WTC11 (cell line): ENCODE measurements at regions of chr1 and their contacts with region 1.

Region 1: DNA sequence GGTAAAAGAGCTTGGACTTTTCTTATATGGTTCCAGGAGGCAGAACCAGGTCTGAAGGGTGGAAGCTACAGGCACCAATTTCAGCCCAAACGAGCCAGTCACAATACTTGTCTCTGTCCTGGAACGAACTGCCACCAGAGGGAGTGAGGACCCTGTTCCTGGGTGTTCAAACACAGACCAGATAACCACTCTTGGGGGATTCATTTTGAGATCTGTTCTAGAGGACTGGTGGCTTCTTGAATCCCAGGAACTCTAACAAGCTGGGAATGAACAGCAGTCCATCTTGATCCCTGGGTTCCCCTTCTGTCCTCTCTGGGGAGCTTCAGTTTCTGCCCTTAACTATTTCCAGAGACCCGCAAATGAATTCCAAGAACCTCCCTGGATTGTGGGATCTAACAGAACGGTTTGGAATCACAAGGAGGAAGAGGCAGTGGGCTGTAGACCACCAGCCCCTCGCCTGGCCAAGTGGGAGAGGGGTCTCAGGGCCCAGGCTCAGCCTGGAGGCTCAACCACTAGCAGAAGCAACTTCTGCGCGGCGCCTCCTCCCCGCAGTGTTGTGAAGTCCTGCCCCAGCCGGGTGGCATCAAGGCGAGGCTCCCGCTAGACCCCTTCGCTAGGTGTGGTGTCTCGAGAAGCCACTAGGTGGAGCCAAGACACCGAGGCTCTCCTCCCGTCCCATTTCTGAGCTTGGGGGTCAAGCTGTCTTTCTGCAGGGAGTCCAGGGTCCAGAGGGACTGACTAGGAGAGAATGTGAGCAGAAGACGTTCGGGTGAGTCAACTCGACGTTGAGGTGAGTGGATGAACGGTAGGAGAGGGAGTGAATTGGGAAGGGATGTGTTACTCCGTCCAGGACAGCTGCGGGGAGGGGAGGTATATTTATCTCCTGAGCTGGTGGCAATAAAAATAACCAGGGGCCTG is 12.1 kb upstream of the NES start:
- DNase-seq: peak; percentile 90
- ATAC-seq: peak; percentile 51
- H3K4me3 Mint-ChIP-seq: peak overlapping the region; percentile 74
- H3K27ac Mint-ChIP-seq: peak overlapping the region; percentile 25; the same call in 1 of the 2 replicates
- H3K4me1 Mint-ChIP-seq: peaks cover 57% of the 10 kb centered on the region
- H3K27me3 Mint-ChIP-seq: peaks cover 7% of the 10 kb centered on the region; the same call in 1 of the 2 replicates
- CTCF ChIP-seq: peak; percentile 87

Region 2: GRCh38 chr1:156540791-156541383 is 148.4 kb before region 1 on chr1:
- CTCF ChIA-PET with region 1: no interaction called
- POLR2A ChIA-PET with region 1: no interaction called
- DNase-seq: no peak
- ATAC-seq: no peak
- H3K4me3 Mint-ChIP-seq: no peak overlapping the region
- H3K27ac Mint-ChIP-seq: no peak overlapping the region
- H3K4me1 Mint-ChIP-seq: peaks cover 9% of the 10 kb centered on the region; the same call in 1 of the 2 replicates
- H3K27me3 Mint-ChIP-seq: no peaks in the 10 kb centered on the region
- CTCF ChIP-seq: no peak

Region 3: GRCh38 chr1:156625436-156626078 is 63.7 kb before region 1 on chr1:
- CTCF ChIA-PET with region 1: interaction called, 54 read pairs
- POLR2A ChIA-PET with region 1: no interaction called
- DNase-seq: peak; percentile 66
- ATAC-seq: peak; percentile 40
- H3K4me3 Mint-ChIP-seq: peak overlapping the region; percentile 79
- H3K27ac Mint-ChIP-seq: no peak overlapping the region
- H3K4me1 Mint-ChIP-seq: peaks cover 6% of the 10 kb centered on the region
- H3K27me3 Mint-ChIP-seq: peaks cover 83% of the 10 kb centered on the region
- CTCF ChIP-seq: peak; percentile 94

Region 4: DNA sequence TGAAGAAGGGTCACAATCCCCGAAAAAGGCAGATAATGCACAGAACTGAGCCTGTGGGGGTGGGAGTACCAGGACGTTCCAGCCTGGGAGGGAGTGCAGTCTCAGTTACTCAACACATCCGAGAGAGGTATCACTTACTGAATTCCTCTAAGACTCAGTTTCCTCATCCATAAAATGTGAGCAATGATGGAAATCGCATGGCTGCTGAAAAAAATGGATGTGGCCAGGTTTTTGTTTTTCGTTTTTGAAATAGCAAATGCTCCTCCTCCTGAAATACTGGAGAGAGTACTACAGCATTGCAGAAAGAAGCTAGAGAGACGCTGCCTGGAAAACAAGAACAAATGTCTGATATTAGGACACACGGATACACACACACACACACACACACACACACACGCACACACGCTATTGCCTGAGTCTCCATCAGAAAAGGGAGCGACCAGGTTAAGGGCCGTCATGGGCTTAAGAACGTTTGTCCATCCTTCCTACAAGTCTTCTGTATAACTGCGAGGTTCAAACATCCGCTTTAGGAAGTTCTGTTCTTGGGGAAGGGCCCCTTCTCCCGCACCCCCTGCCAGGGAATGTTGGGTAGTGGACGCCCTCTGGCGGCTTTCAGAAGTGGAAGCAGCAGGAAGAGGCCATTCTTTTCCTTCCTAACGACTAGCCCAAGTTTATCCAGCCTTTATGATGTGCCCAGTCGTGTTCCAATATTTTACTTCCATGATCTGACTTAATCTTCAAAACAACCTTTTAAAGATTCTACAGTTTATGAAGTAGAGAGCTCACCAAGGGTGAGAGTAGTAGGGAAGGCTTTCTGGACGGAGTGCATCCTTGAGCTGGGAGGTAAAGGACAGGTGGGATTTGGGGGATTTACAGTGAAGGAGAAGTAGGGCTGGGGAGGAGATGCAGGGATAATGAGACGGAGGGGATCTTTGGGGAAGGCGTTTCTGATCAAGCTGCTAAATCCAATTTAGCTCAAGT is 11.4 kb before region 1 on chr1:
- CTCF ChIA-PET with region 1: interaction called, 245 read pairs
- POLR2A ChIA-PET with region 1: interaction called, 16 read pairs
- DNase-seq: peak; percentile 77
- ATAC-seq: peak; percentile 2
- H3K4me3 Mint-ChIP-seq: peak overlapping the region; percentile 76
- H3K27ac Mint-ChIP-seq: peak overlapping the region; percentile 82
- H3K4me1 Mint-ChIP-seq: peaks cover 57% of the 10 kb centered on the region
- H3K27me3 Mint-ChIP-seq: peaks cover 34% of the 10 kb centered on the region
- CTCF ChIP-seq: peak; percentile 76

Region 5: DNA sequence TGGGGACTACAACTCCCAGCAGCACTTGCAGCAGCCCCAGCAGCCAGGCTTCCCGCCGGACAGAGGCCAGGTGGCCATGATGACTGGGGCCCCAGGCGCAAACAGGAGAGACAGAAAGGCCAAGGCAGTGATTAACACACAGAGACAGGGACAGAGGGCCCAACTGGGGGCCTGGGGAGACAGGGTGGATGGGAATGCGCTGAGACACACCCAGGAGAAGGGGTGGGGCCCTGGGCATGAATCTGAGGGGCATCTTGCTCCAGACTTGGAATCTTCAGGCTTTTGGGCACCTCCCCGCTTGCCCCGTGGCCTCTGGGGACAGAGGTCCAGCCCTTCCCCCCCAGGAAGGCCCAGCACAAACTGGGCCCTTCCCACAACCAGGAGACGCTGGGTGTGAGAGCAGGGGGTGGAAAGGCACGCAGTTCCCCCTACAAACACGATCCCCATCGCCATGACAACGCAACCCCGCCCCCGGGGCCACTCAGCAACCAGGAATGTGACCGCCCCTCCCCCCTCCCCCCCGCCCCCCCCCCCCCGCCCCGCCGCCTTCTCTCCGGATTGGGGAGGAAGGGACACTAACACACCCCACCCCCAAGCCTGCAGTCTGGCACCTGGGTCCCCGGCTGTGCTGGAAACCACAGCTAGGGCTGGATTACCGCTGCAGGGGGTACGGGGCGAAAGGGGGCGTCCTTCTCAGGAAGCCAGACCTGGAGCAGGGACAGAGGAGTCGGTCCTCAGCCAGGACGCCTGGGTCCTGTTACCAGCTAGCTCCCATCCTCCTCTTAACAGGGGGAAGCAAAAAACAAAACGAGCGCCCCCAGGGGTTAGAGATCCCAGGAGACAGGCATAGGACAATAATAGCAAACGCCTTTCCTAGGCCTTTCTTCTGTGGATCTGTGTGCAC is 57.7 kb after region 1 on chr1:
- CTCF ChIA-PET with region 1: interaction called, 38 read pairs
- POLR2A ChIA-PET with region 1: interaction called, 16 read pairs
- DNase-seq: peak; percentile 95
- ATAC-seq: peak; percentile 66
- H3K4me3 Mint-ChIP-seq: peak overlapping the region; percentile 94
- H3K27ac Mint-ChIP-seq: peak overlapping the region; percentile 100
- H3K4me1 Mint-ChIP-seq: peaks cover 54% of the 10 kb centered on the region
- H3K27me3 Mint-ChIP-seq: no peaks in the 10 kb centered on the region; the same call in 1 of the 2 replicates
- CTCF ChIP-seq: no peak

Region 6: GRCh38 chr1:156804572-156805243 is 115.4 kb after region 1 on chr1:
- CTCF ChIA-PET with region 1: interaction called, 11 read pairs
- POLR2A ChIA-PET with region 1: no interaction called
- DNase-seq: no peak
- ATAC-seq: no peak
- H3K4me3 Mint-ChIP-seq: no peak overlapping the region
- H3K27ac Mint-ChIP-seq: no peak overlapping the region
- H3K4me1 Mint-ChIP-seq: no peaks in the 10 kb centered on the region
- H3K27me3 Mint-ChIP-seq: no peaks in the 10 kb centered on the region
- CTCF ChIP-seq: no peak

Region 7: GRCh38 chr1:156876281-156876680 is 187.0 kb after region 1 on chr1:
- CTCF ChIA-PET with region 1: interaction called, 14 read pairs
- POLR2A ChIA-PET with region 1: no interaction called
- DNase-seq: peak; percentile 76
- ATAC-seq: peak; percentile 96
- H3K4me3 Mint-ChIP-seq: peak overlapping the region; percentile 13; the same call in 1 of the 2 replicates
- H3K27ac Mint-ChIP-seq: no peak overlapping the region
- H3K4me1 Mint-ChIP-seq: peaks cover 4% of the 10 kb centered on the region
- H3K27me3 Mint-ChIP-seq: peaks cover 32% of the 10 kb centered on the region
- CTCF ChIP-seq: 0 out of 2 replicates have a peak, but pooled peaks have one; percentile 17

Region 8: DNA sequence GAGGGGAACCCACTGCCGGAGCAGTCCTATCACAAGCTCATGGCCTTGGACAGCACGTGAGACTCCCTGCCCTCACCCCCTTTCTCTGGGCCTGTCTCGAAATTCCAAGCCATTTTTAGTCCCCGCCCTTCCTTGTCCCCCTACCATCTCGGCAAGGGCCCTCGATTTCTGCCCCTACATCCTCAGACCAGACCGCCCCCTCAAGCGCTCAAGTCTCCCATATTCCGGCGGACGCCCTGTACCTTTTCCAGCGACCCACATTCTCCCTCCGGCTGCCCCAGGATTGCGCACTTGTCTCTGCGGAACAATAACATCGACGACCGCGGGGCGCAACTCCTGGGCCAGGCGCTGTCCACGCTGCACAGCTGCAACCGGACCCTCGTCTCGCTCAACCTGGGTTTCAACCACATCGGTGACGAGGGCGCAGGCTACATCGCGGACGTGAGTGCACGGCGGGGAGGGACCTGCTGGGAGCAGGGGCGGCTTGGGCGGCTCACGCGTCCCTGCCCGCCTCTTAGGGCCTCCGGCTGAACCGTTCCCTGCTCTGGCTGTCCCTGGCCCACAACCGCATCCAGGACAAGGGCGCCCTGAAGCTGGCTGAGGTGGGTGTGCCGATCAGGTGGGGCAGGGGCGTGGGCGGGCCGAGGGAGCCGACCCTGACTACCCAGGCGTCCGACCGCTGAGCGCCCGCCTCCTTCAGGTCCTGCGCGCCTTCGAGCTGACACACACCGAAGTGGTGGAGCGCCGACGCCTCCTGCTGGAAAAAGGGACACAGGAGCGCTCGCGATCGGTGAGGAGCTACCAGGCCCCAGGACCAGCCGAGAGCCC is 238.1 kb after region 1 on chr1:
- CTCF ChIA-PET with region 1: interaction called, 42 read pairs
- POLR2A ChIA-PET with region 1: interaction called, 3 read pairs
- DNase-seq: peak; percentile 92
- ATAC-seq: peak; percentile 83
- H3K4me3 Mint-ChIP-seq: peak overlapping the region; percentile 68
- H3K27ac Mint-ChIP-seq: no peak overlapping the region
- H3K4me1 Mint-ChIP-seq: peaks cover 21% of the 10 kb centered on the region
- H3K27me3 Mint-ChIP-seq: peaks cover 91% of the 10 kb centered on the region
- CTCF ChIP-seq: peak; percentile 52; the same call in 1 of the 2 replicates